ENCODE measurements at regions of chr4 and their contacts with region 1.

Region 1: GRCh38 chr4:44760142-44760898 is 34.0 kb upstream of the GNPDA2 start:
- DNase-seq: no peak
- ATAC-seq: no peak

Region 2: DNA sequence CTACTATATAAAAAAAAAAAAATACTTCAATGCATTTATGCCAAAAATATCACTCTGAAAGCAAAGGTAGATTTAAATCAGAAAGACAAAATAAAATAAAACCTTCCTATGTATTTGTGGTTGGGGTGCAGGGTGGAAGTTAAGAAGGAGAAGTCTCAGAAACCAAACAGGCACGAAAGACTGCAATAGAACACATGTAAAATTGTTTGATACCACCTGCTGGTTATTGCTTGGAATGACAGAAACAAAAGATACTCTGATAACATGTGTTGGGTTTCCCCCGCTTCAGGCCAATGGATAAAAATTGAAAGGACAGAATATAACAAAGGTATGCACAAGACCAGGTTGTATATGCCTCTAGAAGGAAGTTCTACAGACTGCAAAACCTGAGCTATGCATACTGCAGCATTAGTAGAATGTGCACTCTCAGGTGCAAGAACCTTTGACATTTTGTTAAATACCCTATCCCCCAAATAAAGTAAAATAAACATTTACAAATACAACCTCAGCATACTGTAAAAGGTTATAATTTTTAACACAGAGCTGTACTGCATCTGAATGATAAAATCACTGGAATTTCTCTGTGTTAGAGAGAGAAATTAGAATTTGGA is 1510.8 kb after region 1 on chr4:
- intact Hi-C with region 1: loop called in 1 of 2 experiments (anchors 10 kb)
- DNase-seq: no peak
- ATAC-seq: peak; percentile 56